HEK293 (cell line): ENCODE measurements at regions of chr15 and their contacts with region 1.

Region 1: DNA sequence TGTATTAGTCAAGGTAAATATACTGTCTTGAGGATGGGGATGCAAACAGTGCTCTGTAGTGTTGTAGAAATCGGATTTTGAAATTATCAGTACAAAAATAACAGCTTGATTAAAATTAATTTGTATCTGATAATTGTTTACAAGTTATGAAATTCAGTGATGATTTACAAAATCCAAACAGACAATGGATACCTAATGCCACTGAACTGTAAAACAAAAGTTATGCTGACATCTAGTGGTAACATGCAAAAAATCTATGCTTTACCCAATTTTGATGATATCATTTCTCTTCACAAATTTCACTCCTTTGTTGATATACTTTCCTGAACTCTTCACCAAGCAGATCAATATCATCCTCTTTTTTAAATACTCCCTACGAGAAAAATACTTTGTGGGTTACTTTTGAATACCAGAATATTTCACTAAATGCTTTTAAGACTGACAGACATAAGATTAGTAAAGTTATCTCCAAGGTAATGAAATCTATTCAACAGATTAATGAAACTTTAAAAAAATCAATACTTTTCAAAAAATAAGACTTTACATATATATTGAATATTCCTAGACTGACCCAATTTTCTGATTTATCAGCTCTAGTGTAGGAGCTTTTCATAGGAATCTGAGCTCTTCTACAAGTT is 36.0 kb downstream of the MNS1 start:
- H3K4me3 ChIP-seq: no peak overlapping the region
- H3K27ac ChIP-seq: no peak overlapping the region
- H3K4me1 ChIP-seq: no peaks in the 10 kb centered on the region
- CTCF ChIP-seq: peak; percentile 9; the same call in 1 of the 2 replicates

Region 2: DNA sequence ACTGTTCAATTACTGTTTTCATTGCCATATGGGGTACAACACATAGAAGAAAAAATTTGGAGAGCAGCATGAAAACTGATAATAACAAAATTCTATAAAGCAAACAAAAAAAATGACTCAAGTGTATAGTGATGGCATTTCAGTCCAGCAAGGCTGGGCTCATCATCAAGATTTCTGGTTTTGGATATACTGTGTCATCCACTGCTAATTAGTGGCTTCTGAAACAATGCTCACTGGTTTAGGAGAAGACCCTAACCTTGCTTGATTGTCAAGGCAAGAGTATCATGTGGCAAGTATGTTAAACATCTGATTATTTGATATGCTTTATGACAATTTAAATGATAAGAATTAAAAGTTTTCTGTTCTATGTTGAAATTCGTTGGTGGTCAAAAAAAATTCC is 282.2 kb before region 1 on chr15:
- CTCF ChIA-PET with region 1: no interaction called
- POLR2A ChIA-PET with region 1: no interaction called
- H3K4me3 ChIP-seq: no peak overlapping the region
- H3K27ac ChIP-seq: no peak overlapping the region
- H3K4me1 ChIP-seq: no peaks in the 10 kb centered on the region
- CTCF ChIP-seq: no peak

Region 3: DNA sequence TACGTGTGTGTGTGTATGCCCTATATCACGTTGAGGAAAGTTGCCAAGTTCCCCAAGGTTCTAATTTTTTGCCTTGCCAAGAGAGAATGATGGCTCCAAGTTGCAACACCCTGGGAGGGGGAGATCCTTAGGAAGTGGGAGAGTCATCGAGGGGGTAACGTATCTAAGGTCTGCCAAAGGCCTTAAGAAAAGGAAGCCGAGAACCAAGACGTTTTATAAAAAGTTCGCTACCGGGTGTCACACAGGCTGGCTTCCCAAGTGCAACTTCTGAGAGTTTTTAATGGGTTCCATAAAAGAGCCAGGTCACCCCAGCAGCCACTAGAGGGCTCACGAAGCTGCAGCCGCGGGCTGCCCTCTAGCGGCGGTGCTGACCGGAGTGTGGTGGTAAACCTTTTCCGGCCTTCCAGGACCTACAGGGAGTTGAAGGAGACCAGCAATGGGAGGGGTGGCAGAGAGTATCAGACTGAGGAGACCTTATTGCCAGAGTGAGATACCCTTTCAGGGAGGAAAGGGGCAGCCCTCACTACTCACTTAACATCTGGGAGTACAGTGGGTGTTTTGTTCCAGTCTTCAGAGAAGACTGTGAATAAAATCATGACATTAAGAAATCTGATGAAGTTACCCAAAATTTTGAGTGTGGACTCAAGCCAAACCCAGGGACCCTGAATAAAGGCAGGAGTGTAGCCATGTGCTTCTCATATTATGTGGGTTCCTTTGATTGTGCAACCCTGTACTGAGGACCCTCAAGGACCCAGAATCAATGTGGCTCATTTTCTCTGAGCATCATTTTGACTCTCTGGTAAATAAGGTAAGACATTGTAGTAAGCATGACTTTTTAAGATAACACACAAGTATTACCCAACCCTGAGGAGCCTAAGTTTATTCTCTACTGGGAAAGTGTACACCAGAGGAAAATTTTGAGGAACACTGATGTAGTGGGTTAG is 182.8 kb before region 1 on chr15:
- CTCF ChIA-PET with region 1: interaction called, 83 read pairs
- POLR2A ChIA-PET with region 1: no interaction called
- H3K4me3 ChIP-seq: peak overlapping the region; percentile 26
- H3K27ac ChIP-seq: peak overlapping the region; percentile 81; the same call in 1 of the 2 replicates
- H3K4me1 ChIP-seq: peaks cover 6% of the 10 kb centered on the region; the same call in 1 of the 2 replicates
- CTCF ChIP-seq: peak; percentile 96

Region 4: GRCh38 chr15:56394909-56395308 is 34.0 kb before region 1 on chr15:
- CTCF ChIA-PET with region 1: no interaction called
- POLR2A ChIA-PET with region 1: no interaction called
- H3K4me3 ChIP-seq: no peak overlapping the region
- H3K27ac ChIP-seq: no peak overlapping the region
- H3K4me1 ChIP-seq: no peaks in the 10 kb centered on the region
- CTCF ChIP-seq: no peak

Region 5: GRCh38 chr15:56411122-56411749 is 17.7 kb before region 1 on chr15:
- CTCF ChIA-PET with region 1: interaction called, 10 read pairs
- POLR2A ChIA-PET with region 1: no interaction called
- H3K4me3 ChIP-seq: no peak overlapping the region
- H3K27ac ChIP-seq: no peak overlapping the region
- H3K4me1 ChIP-seq: no peaks in the 10 kb centered on the region
- CTCF ChIP-seq: no peak

Region 6: GRCh38 chr15:56475351-56475750 is 46.4 kb after region 1 on chr15:
- CTCF ChIA-PET with region 1: no interaction called
- POLR2A ChIA-PET with region 1: no interaction called
- H3K4me3 ChIP-seq: no peak overlapping the region
- H3K27ac ChIP-seq: no peak overlapping the region
- H3K4me1 ChIP-seq: no peaks in the 10 kb centered on the region
- CTCF ChIP-seq: no peak